PC-3 (cell line): ENCODE measurements at regions of chr12 and their contacts with region 1.

Region 1: GRCh38 chr12:89051065-89051677 is 301.1 kb downstream of the DUSP6 start:
- DNase-seq: peak; percentile 86
- ATAC-seq: peak; percentile 73
- H3K4me3 ChIP-seq: no peak overlapping the region
- H3K27ac ChIP-seq: no peak overlapping the region
- H3K4me1 ChIP-seq: 0 out of 2 replicates have a peak, but pooled peaks cover 5% of the 10 kb centered on the region
- H3K27me3 ChIP-seq: no peaks in the 10 kb centered on the region
- CTCF ChIP-seq: peak; percentile 96

Region 2: GRCh38 chr12:89073027-89073398 is 21.8 kb after region 1 on chr12:
- CTCF ChIA-PET with region 1: no interaction called
- POLR2A ChIA-PET with region 1: no interaction called
- intact Hi-C with region 1: no loop called
- DNase-seq: peak; percentile 77
- ATAC-seq: peak; percentile 80
- H3K4me3 ChIP-seq: no peak overlapping the region
- H3K27ac ChIP-seq: peak overlapping the region; percentile 54
- H3K4me1 ChIP-seq: peaks cover 33% of the 10 kb centered on the region
- H3K27me3 ChIP-seq: no peaks in the 10 kb centered on the region
- CTCF ChIP-seq: no peak

Region 3: DNA sequence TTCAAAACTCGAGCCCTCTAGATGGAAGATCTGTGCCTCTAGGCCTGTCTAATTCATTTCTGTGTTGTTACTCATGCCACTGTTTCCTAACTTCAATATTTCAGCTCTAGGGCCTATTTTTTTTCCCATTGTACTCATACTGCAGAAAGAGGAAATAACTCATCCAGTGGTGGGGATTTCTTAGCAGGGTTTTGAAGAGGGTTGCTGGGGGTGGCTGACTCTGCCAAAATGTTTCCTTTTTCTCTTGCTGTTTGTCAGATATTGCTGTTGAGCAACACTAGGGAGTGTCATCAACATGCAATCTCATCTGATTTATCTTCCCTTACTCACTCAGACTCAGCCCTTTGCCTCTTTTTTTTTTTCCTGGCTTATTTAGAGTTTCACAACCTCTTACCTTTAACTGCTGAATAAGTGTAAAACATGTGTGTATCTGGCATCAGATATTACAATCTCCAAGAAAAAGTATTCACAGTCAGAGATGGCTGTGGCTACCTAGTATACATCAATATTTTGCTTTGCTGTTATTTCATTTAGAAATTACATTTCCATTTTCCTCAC is 111.6 kb after region 1 on chr12:
- CTCF ChIA-PET with region 1: no interaction called
- POLR2A ChIA-PET with region 1: no interaction called
- intact Hi-C with region 1: loop called (anchors 5 kb)
- DNase-seq: peak; percentile 96
- ATAC-seq: peak; percentile 79
- H3K4me3 ChIP-seq: no peak overlapping the region
- H3K27ac ChIP-seq: peak overlapping the region; percentile 96
- H3K4me1 ChIP-seq: peaks cover 63% of the 10 kb centered on the region
- H3K27me3 ChIP-seq: no peaks in the 10 kb centered on the region
- CTCF ChIP-seq: no peak

Region 4: DNA sequence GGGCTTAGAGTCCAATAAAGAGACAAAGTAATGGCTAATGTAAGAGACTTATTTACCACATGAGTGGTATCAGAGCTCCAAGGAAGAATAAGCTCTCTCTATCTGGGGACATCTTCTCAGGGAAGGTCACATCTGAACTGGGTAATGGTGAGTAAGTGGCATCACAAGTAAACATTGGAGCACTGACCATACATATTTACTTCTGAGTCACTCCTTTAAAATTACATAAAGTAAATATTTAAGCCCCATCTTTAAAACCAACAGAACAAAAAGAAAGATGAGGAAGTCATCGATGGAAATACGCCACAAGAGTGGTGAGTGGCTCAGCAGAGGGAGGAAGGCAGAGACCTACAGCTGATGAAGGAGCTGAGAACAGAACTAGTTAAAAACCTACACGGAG is 141.3 kb after region 1 on chr12:
- CTCF ChIA-PET with region 1: no interaction called
- POLR2A ChIA-PET with region 1: no interaction called
- intact Hi-C with region 1: loop called (anchors 10 kb)
- DNase-seq: peak; percentile 90
- ATAC-seq: peak; percentile 99
- H3K4me3 ChIP-seq: no peak overlapping the region
- H3K27ac ChIP-seq: peak overlapping the region; percentile 81
- H3K4me1 ChIP-seq: peaks cover 15% of the 10 kb centered on the region
- H3K27me3 ChIP-seq: no peaks in the 10 kb centered on the region
- CTCF ChIP-seq: no peak

Region 5: DNA sequence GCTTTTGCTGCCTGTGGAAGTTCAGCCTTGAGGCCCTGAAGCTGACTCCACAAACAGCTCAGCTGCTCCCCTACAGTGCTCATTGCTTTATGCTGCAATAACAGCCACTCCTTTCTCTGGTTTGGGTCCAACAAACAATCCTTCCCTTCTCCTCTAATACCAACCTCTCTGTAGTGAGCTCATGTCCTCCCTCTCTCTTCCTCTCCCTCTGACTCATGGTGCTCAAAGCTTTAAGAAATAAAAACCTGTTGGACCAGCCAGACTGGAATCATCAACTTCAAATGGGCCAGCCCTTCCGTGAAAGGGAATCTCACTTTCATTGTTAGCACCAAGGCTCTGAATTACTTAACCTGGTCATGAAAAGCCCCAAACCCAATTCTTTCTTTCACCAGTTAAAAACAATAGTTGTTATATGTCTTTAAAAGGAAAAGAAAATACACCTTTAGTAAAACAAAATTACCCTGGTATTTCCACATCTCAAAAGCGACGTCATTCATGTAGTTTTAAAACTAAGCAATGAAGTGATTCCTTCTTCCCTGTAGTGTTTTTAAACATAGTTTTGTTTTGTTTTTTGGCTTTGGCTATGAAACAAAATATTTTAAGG is 174.7 kb after region 1 on chr12:
- CTCF ChIA-PET with region 1: no interaction called
- POLR2A ChIA-PET with region 1: no interaction called
- intact Hi-C with region 1: loop called (anchors 5 kb)
- DNase-seq: peak; percentile 99
- ATAC-seq: peak; percentile 97
- H3K4me3 ChIP-seq: peak overlapping the region; percentile 55
- H3K27ac ChIP-seq: peak overlapping the region; percentile 95
- H3K4me1 ChIP-seq: peaks cover 40% of the 10 kb centered on the region
- H3K27me3 ChIP-seq: no peaks in the 10 kb centered on the region
- CTCF ChIP-seq: no peak

Region 6: DNA sequence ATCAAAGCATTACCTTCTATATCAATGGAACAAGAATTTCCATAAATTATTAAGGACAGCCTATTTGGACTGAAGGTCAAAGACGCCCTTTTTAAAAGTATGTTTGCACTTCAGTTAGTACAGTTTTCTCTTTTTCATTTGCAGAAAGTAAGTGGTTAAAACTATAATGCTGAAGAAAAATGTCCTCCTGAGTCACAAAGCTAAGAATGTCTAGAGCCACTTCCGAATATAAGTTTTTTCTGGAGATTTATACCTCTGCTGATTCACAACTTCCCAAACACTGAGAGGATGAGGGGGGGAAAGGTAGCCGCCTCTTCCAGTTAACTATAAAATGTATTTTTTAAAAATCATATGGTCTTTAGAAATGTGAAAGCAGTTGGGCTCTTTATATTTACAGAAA is 216.2 kb after region 1 on chr12:
- CTCF ChIA-PET with region 1: no interaction called
- POLR2A ChIA-PET with region 1: no interaction called
- intact Hi-C with region 1: loop called (anchors 5 kb)
- DNase-seq: peak; percentile 53
- ATAC-seq: peak; percentile 91
- H3K4me3 ChIP-seq: no peak overlapping the region
- H3K27ac ChIP-seq: 0 out of 2 replicates have a peak overlapping the region, but pooled peaks have one; percentile 5
- H3K4me1 ChIP-seq: peaks cover 15% of the 10 kb centered on the region
- H3K27me3 ChIP-seq: no peaks in the 10 kb centered on the region
- CTCF ChIP-seq: no peak

Region 7: GRCh38 chr12:89529738-89530137 is 478.6 kb after region 1 on chr12:
- CTCF ChIA-PET with region 1: no interaction called
- POLR2A ChIA-PET with region 1: no interaction called
- intact Hi-C with region 1: loop called (anchors 1 kb)
- DNase-seq: peak; percentile 74
- ATAC-seq: 0 out of 2 replicates have a peak, but pooled peaks have one; percentile 14
- H3K4me3 ChIP-seq: no peak overlapping the region
- H3K27ac ChIP-seq: no peak overlapping the region
- H3K4me1 ChIP-seq: 0 out of 2 replicates have a peak, but pooled peaks cover 7% of the 10 kb centered on the region
- H3K27me3 ChIP-seq: no peaks in the 10 kb centered on the region
- CTCF ChIP-seq: peak; percentile 86